PC-9 (cell line): ENCODE measurements at regions of chr22 and their contacts with region 1.

Region 1: GRCh38 chr22:31206906-31207678 is 5.0 kb upstream of the LIMK2 start:
- DNase-seq: peak; percentile 87 to 99
- H3K4me3 ChIP-seq: no peak overlapping the region
- H3K27ac ChIP-seq: peak overlapping the region; percentile 31; the same call in 1 of the 2 replicates
- H3K4me1 ChIP-seq: peaks cover 23% of the 10 kb centered on the region
- H3K27me3 ChIP-seq: no peaks in the 10 kb centered on the region
- CTCF ChIP-seq: no peak

Region 2: GRCh38 chr22:31173386-31174145 is 33.5 kb before region 1 on chr22:
- CTCF ChIA-PET with region 1: no interaction called
- POLR2A ChIA-PET with region 1: no interaction called
- intact Hi-C with region 1: loop called (anchors 1 kb)
- DNase-seq: peak in 1 of 2 experiments; percentile 87
- H3K4me3 ChIP-seq: no peak overlapping the region
- H3K27ac ChIP-seq: peak overlapping the region; percentile 66
- H3K4me1 ChIP-seq: peaks cover 27% of the 10 kb centered on the region
- H3K27me3 ChIP-seq: no peaks in the 10 kb centered on the region
- CTCF ChIP-seq: no peak

Region 3: GRCh38 chr22:31253949-31254348 is 46.9 kb after region 1 on chr22:
- CTCF ChIA-PET with region 1: interaction called, 3 read pairs
- POLR2A ChIA-PET with region 1: no interaction called
- intact Hi-C with region 1: loop called (anchors 1 kb)
- DNase-seq: peak; percentile 81 to 95
- H3K4me3 ChIP-seq: no peak overlapping the region
- H3K27ac ChIP-seq: no peak overlapping the region
- H3K4me1 ChIP-seq: peaks cover 6% of the 10 kb centered on the region; the same call in 1 of the 2 replicates
- H3K27me3 ChIP-seq: no peaks in the 10 kb centered on the region
- CTCF ChIP-seq: no peak

Region 4: GRCh38 chr22:31272522-31273446 is 65.7 kb after region 1 on chr22:
- CTCF ChIA-PET with region 1: interaction called, 28 read pairs
- POLR2A ChIA-PET with region 1: no interaction called
- intact Hi-C with region 1: loop called (anchors 1 kb)
- DNase-seq: peak; percentile 55 to 71
- H3K4me3 ChIP-seq: no peak overlapping the region
- H3K27ac ChIP-seq: no peak overlapping the region
- H3K4me1 ChIP-seq: peaks cover 50% of the 10 kb centered on the region
- H3K27me3 ChIP-seq: no peaks in the 10 kb centered on the region
- CTCF ChIP-seq: peak; percentile 88